ENCODE measurements at regions of chr1 and their contacts with region 1.

Region 1: DNA sequence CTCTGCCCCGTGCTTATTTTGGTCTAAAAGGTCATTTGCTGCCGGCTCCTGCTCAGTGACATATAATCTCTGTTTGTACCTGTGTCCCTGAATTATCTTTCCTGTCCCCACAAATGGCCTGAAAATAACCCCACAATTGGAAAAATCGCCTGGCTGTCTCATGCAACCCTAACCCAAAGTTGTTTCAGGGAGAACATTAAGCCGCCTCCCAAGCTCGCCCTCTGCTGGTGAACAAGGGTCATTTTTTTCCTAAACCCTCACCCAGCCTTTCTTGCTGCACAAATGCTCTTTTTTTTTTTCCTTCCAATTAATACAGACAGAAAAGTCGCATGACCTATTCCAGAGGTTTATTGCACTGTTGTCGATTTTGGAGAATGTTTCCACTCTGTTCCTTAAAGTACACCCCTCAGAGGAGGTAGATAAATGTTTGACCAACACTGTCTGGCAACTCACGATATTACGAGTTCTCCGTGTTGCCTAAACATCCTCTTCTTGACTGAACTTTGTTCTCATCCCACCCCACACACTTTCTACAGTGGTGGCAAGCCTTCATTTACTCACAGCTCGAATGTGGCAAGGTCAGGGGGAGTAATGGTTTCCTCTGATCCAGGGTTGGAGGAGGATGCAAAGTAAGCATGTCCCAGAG is 148.7 kb downstream of the ZZZ3 start:
- DNase-seq: peak in 5 of 6 donors; percentile 39 to 67 (median 40)
- ATAC-seq: peak; percentile 61 to 91 (median 88)
- H3K4me3 ChIP-seq: no peak overlapping the region
- H3K27ac ChIP-seq: no peak overlapping the region
- H3K4me1 ChIP-seq: peaks cover 0 to 7% (median 5%) of the 10 kb centered on the region in 3 donors
- H3K27me3 ChIP-seq: no peaks in the 10 kb centered on the region
- CTCF ChIP-seq: peak; percentile 77 to 85 (median 78)

Region 2: GRCh38 chr1:77146270-77146669 is 387.5 kb before region 1 on chr1:
- intact Hi-C with region 1: loop called in 1 of 3 experiments (anchors 5 kb)
- DNase-seq: no peak
- ATAC-seq: no peak
- H3K4me3 ChIP-seq: no peak overlapping the region
- H3K27ac ChIP-seq: no peak overlapping the region
- H3K4me1 ChIP-seq: no peaks in the 10 kb centered on the region
- H3K27me3 ChIP-seq: no peaks in the 10 kb centered on the region
- CTCF ChIP-seq: no peak

Region 3: GRCh38 chr1:77504986-77505385 is 28.8 kb before region 1 on chr1:
- intact Hi-C with region 1: no loop called
- DNase-seq: no peak
- ATAC-seq: no peak
- H3K4me3 ChIP-seq: no peak overlapping the region
- H3K27ac ChIP-seq: no peak overlapping the region
- H3K4me1 ChIP-seq: no peaks in the 10 kb centered on the region
- H3K27me3 ChIP-seq: no peaks in the 10 kb centered on the region
- CTCF ChIP-seq: no peak

Region 4: DNA sequence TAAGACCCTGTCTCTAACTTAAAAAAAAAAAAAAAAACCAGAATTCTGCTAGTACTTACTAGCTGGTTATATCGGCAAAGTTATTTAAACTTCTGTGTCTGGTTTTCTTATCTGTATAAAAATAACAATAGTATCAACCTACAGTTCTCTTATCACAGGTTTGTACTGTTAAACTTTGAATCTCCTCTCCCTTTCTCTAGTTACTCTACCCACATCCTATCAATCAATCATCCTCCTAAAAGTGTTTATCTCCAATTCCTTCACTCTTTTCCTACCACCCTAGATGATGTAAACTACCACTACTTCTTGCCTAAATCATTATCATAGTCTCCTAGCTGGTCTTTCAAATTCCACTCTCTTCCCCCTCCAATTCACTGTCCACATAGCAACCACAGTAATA is 198.3 kb after region 1 on chr1:
- intact Hi-C with region 1: no loop called
- DNase-seq: no peak
- ATAC-seq: no peak
- H3K4me3 ChIP-seq: no peak overlapping the region
- H3K27ac ChIP-seq: no peak overlapping the region
- H3K4me1 ChIP-seq: no peaks in the 10 kb centered on the region
- H3K27me3 ChIP-seq: no peaks in the 10 kb centered on the region
- CTCF ChIP-seq: no peak

Measured in pancreas (tissue), 10 donors.